ENCODE measurements at regions of chr4 and their contacts with region 1.

Region 1: DNA sequence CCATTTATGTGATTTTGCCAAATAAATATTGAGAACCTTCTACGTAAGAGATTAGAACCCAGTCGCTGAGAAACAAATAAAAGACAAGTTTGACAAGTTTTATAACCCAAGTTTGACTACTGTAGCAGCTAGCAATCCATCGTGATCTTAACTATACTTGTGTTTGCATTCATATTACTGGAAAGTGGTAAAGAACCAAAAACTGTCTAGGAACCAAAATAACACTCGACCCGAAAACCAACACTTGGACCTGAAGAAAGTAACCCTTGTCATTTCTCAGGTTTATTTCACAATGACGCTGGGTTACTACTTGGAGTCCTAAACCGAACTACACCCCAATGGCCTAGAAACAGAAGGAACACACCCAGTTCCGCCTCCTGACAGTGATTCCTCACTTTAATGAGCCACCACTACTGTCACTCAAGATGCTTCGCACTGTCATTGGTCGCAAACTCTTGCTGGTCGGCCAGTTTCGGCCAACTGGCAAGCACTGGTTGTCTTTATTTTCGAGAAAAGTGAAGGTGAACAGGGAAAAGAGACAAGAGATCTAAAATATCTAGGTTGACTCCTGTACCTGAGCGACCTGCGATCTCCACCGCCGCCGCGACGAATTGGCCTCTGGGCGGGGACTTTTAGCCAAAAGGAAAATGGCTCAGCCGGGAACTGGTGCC is 496 bp downstream of the FBXO8 start:
- DNase-seq: peak; percentile 47 to 87 (median 83)
- ATAC-seq: peak; percentile 97
- H3K4me3 ChIP-seq: peak overlapping the region; percentile 99
- H3K4me3 Mint-ChIP-seq: peak overlapping the region; percentile 91 to 100 (median 99)
- H3K27ac ChIP-seq: peak overlapping the region; percentile 98
- H3K27ac Mint-ChIP-seq: peak overlapping the region; percentile 99 to 100 (median 100)
- H3K4me1 ChIP-seq: peaks cover 25 to 29% of the 10 kb centered on the region in 2 donors
- H3K4me1 Mint-ChIP-seq: peaks cover 38 to 91% (median 81%) of the 10 kb centered on the region in 7 donors
- H3K27me3 ChIP-seq: no peaks in the 10 kb centered on the region
- H3K27me3 Mint-ChIP-seq: no peaks in the 10 kb centered on the region

Region 2: DNA sequence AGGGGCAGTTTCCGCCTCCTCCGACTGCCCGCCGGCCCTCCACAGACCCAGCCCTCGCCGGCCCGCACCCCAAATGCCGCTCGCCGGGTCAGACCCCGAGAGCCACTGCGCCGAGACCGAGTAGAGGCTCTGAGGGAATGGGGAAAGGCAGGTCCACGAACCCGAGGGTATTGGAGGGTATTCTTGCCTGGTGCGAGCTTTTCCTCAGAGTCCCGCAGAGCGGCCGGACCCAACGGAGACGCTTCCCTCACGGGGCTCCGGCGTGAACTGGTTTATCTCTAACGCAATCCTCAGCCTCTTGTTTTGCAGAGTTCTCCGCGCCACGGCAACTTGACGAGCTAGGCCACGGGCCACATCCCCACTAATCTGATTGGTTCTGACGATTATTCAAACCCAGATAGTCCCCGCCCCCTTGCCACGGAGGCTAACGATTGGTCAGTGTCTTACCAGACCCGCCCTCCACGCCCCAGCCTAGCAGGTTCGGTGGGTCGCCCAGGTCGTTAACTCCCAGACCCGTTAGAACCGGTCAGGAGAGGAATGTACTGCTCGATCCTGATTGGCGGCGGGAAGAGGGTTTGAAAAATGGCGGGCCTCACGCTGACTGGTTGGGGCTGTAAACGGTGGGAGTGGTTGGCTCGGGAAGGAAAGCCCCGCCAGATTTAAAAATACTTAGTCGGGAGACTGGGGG is 948.7 kb before region 1 on chr4 and contains the start of gene HMGB2:
- CTCF ChIA-PET with region 1: no interaction called
- POLR2A ChIA-PET with region 1: interaction called, 8 read pairs
- intact Hi-C with region 1: loop called in 1 of 2 experiments (anchors 1 kb)
- DNase-seq: peak; percentile 96 to 100 (median 100)
- ATAC-seq: peak; percentile 97
- H3K4me3 ChIP-seq: peak within 1 kb of the TSS; percentile 89
- H3K4me3 Mint-ChIP-seq: peak within 1 kb of the TSS; percentile 93 to 100 (median 99)
- H3K27ac ChIP-seq: peak within 1 kb of the TSS; percentile 98
- H3K27ac Mint-ChIP-seq: peak within 1 kb of the TSS; percentile 97 to 100 (median 99)
- H3K4me1 ChIP-seq: peaks cover 7 to 18% of the 10 kb centered on the region in 2 donors
- H3K4me1 Mint-ChIP-seq: peaks cover 20 to 55% (median 30%) of the 10 kb centered on the region in 7 donors
- H3K27me3 ChIP-seq: no peaks in the 10 kb centered on the region
- H3K27me3 Mint-ChIP-seq: peaks cover 6 to 18% (median 11%) of the 10 kb centered on the region in 5 donors
- total RNA-seq, gene HMGB2: 89.3 to 542 (median 106) TPM

Region 3: GRCh38 chr4:174210354-174210753 is 72.6 kb before region 1 on chr4:
- CTCF ChIA-PET with region 1: no interaction called
- POLR2A ChIA-PET with region 1: no interaction called
- intact Hi-C with region 1: no loop called
- DNase-seq: no peak
- ATAC-seq: no peak
- H3K4me3 ChIP-seq: no peak overlapping the region
- H3K4me3 Mint-ChIP-seq: no peak overlapping the region
- H3K27ac ChIP-seq: no peak overlapping the region
- H3K27ac Mint-ChIP-seq: no peak overlapping the region
- H3K4me1 ChIP-seq: peaks cover 12 to 17% of the 10 kb centered on the region in 2 donors
- H3K4me1 Mint-ChIP-seq: peaks cover 24 to 34% (median 27%) of the 10 kb centered on the region in 7 donors
- H3K27me3 ChIP-seq: peaks cover 19 to 31% of the 10 kb centered on the region in 2 donors
- H3K27me3 Mint-ChIP-seq: peaks cover 75 to 85% (median 83%) of the 10 kb centered on the region in 5 donors

Region 4: DNA sequence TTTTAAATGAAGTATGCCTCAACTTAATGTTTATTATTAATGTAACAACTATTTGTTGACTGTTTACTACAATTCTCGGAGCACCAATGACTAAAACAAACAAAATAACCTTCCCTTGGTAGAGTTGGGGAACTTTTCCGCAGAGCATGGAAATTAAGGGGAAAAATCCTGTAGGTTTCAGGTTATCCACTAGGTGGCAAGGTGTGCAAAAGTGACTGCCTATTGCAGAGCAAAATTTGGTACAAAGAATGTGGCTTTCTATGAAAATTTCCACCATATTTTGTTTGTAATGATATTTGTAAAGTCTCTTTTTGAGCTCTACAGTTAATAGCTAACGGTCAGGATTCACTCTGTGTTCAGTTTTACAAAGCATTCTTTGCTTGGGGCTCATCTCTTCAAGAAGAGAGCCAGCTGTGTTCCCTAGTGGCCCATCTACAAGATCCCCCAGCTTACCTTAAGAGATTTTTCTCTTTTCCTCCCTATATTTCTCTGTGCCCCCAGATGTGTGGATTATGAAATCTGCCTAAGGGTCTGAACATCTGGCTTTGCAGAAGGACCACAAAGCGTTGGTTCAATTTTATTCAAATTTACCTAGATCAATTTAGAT is 60.6 kb before region 1 on chr4:
- CTCF ChIA-PET with region 1: no interaction called
- POLR2A ChIA-PET with region 1: interaction called, 5 read pairs
- intact Hi-C with region 1: loop called in 1 of 2 experiments (anchors 5 kb)
- DNase-seq: peak in 3 of 9 donors; percentile 22 to 33 (median 25)
- ATAC-seq: peak; percentile 64
- H3K4me3 ChIP-seq: no peak overlapping the region
- H3K4me3 Mint-ChIP-seq: no peak overlapping the region
- H3K27ac ChIP-seq: no peak overlapping the region
- H3K27ac Mint-ChIP-seq: no peak overlapping the region
- H3K4me1 ChIP-seq: peaks cover 5% of the 10 kb centered on the region in 2 donors
- H3K4me1 Mint-ChIP-seq: peaks cover 7 to 11% (median 8%) of the 10 kb centered on the region in 7 donors
- H3K27me3 ChIP-seq: peaks cover 0 to 15% of the 10 kb centered on the region in 2 donors
- H3K27me3 Mint-ChIP-seq: peaks cover 43 to 69% (median 63%) of the 10 kb centered on the region in 5 donors

Region 5: DNA sequence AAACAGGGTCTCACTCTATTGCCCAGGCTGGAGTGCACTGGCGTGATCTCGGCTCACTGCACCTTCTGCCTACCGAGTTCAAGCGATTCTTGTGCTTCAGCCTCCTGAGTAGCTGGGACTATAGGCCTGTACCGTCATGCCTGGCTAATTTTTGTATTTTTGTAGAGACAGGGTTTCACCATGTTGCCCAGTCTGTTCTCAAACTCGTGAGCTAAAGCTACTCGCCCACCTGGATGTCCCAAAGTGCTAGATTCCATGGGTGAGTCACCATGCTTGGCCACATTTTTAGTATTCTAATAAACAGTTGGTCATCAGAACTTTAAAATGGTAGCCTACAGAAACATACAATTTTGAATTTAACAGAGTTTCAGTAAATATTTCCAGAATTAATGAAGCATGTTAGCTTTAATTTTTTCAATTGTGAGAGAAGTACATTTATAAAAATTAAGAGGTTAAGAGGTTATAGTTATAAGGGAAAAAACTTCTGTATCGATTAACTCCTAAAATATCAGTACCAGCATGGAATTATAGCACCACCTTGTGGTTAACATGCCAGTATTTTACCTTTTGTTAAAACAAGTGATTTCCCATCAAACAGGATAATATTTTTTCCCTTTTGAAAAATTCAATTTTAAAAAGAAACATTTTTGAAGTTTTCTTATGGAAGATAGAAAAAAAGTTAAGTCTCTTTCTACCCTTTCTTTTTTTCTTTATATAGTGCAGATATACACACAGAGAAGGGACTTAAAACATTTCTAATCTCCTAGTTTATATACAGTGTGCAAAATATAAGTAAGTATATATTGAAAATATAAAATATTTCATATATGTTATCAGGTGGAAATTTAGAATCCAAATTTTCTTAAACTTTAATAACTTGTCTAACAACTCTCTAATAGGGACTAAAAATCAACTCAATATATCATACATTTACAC is 36.1 kb after region 1 on chr4:
- CTCF ChIA-PET with region 1: no interaction called
- POLR2A ChIA-PET with region 1: no interaction called
- intact Hi-C with region 1: loop called in 1 of 2 experiments (anchors 2 kb)
- DNase-seq: peak in 5 of 9 donors; percentile 27 to 45 (median 39)
- ATAC-seq: no peak
- H3K4me3 ChIP-seq: no peak overlapping the region
- H3K4me3 Mint-ChIP-seq: no peak overlapping the region
- H3K27ac ChIP-seq: no peak overlapping the region
- H3K27ac Mint-ChIP-seq: no peak overlapping the region
- H3K4me1 ChIP-seq: no peaks in the 10 kb centered on the region
- H3K4me1 Mint-ChIP-seq: no peaks in the 10 kb centered on the region
- H3K27me3 ChIP-seq: no peaks in the 10 kb centered on the region
- H3K27me3 Mint-ChIP-seq: no peaks in the 10 kb centered on the region

Region 6: GRCh38 chr4:174490451-174490870 is 207.5 kb after region 1 on chr4:
- CTCF ChIA-PET with region 1: no interaction called
- POLR2A ChIA-PET with region 1: no interaction called
- intact Hi-C with region 1: loop called in 1 of 2 experiments (anchors 10 kb)
- DNase-seq: no peak
- ATAC-seq: no peak
- H3K4me3 ChIP-seq: no peak overlapping the region
- H3K4me3 Mint-ChIP-seq: no peak overlapping the region
- H3K27ac ChIP-seq: no peak overlapping the region
- H3K27ac Mint-ChIP-seq: no peak overlapping the region
- H3K4me1 ChIP-seq: no peaks in the 10 kb centered on the region
- H3K4me1 Mint-ChIP-seq: no peaks in the 10 kb centered on the region
- H3K27me3 ChIP-seq: no peaks in the 10 kb centered on the region
- H3K27me3 Mint-ChIP-seq: no peaks in the 10 kb centered on the region

Region 7: GRCh38 chr4:174631901-174632758 is 349.2 kb after region 1 on chr4:
- CTCF ChIA-PET with region 1: no interaction called
- POLR2A ChIA-PET with region 1: no interaction called
- intact Hi-C with region 1: loop called in 1 of 2 experiments (anchors 5 kb)
- DNase-seq: peak in 4 of 9 donors; percentile 16 to 35 (median 27)
- ATAC-seq: peak; percentile 60
- H3K4me3 ChIP-seq: no peak overlapping the region
- H3K4me3 Mint-ChIP-seq: no peak overlapping the region
- H3K27ac ChIP-seq: no peak overlapping the region
- H3K27ac Mint-ChIP-seq: no peak overlapping the region
- H3K4me1 ChIP-seq: no peaks in the 10 kb centered on the region
- H3K4me1 Mint-ChIP-seq: peaks cover 0 to 4% (median 0%) of the 10 kb centered on the region in 7 donors
- H3K27me3 ChIP-seq: no peaks in the 10 kb centered on the region
- H3K27me3 Mint-ChIP-seq: peaks cover 0 to 2% (median 0%) of the 10 kb centered on the region in 5 donors